ENCODE measurements at regions of chr6 and their contacts with region 1.

Region 1: DNA sequence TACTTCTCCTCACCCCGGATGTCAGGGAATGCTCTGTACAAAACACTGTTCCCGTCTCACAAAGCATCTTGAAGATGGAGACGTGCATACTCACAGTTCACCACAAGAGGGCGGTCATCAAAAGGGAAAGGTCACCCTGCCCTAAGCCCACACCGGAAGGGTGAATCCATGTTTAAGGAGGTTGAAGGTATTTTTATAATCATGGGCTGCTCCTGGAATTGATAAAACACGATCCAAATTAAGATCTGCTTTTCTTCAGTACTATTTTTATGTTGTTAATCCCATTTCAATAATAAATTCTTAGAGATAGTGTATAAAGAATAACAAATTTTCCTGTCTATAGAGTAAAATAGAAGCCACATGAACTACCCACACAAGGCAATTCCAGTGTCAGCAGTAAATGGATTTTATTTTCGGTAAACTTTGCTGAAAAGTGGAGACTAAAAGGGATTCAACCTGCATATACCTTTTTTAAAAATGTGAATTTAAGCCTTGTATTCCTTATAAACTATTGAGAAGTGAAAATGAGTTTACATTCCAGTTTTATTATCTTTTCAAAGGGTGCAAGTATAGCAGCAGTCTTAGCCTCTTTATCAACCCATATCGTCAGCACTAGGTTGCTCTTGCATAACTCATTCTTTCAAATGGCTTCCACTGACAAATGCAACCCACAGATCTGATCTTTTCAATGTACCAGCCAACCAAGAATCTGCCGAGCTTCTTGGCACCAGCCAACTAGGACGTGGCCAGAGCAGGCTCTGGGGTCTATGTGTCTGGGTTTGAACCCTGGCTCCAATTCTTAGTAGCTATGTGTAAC is 79.7 kb upstream of the MBOAT1 start:
- DNase-seq: peak; percentile 39 to 92
- H3K4me3 ChIP-seq: no peak overlapping the region
- H3K27ac ChIP-seq: no peak overlapping the region
- H3K4me1 ChIP-seq: no peaks in the 10 kb centered on the region
- H3K27me3 ChIP-seq: no peaks in the 10 kb centered on the region
- CTCF ChIP-seq: peak; percentile 75 to 89 (median 78)
- EP300 ChIP-seq: no peak
- POLR2A ChIP-seq: no peak
- RAD21 ChIP-seq: peak; percentile 91 to 94

Region 2: DNA sequence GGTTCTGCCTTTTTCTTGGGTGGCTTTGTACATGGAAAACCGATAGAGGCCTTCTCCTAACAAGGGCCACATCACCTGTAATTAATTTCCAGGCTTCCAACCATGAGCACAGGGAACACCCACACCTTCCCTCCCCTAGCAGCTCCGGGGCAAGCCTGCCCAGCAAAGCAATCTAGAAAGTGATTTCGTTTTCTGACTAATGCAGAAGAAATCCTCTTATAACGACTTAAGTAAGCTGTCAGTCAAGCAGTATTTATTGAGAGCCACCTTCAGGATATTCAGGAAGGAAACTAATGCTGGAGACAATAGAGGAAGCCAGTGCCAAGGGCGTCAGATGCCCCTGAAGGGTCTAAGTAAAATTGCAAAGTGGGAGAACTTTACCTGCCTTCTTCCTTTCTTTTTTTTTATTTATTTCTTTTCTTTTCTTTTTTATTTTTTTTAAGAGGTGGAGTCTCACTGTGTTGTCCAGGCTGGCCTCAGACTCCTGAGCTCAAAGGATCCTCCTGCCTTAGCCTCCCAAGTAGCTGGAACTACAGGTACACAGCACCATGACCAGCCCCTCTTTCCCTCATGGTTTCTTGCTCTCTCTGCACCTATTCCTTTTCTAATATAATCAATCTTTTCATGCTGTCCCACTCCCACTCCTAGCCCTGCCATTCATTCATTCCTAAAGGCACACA is 12.2 kb before region 1 on chr6:
- CTCF ChIA-PET with region 1: interaction called, 26 read pairs
- POLR2A ChIA-PET with region 1: interaction called, 4 read pairs
- DNase-seq: no peak
- H3K4me3 ChIP-seq: no peak overlapping the region
- H3K27ac ChIP-seq: no peak overlapping the region
- H3K4me1 ChIP-seq: peaks cover 0 to 6% (median 2%) of the 10 kb centered on the region in 4 experiments; a peak in 2 of 7 replicates
- H3K27me3 ChIP-seq: no peaks in the 10 kb centered on the region
- CTCF ChIP-seq: no peak
- EP300 ChIP-seq: no peak
- POLR2A ChIP-seq: no peak
- RAD21 ChIP-seq: no peak

Measured in H1 (cell line).